ENCODE measurements at regions of chr4 and their contacts with region 1.

Region 1: DNA sequence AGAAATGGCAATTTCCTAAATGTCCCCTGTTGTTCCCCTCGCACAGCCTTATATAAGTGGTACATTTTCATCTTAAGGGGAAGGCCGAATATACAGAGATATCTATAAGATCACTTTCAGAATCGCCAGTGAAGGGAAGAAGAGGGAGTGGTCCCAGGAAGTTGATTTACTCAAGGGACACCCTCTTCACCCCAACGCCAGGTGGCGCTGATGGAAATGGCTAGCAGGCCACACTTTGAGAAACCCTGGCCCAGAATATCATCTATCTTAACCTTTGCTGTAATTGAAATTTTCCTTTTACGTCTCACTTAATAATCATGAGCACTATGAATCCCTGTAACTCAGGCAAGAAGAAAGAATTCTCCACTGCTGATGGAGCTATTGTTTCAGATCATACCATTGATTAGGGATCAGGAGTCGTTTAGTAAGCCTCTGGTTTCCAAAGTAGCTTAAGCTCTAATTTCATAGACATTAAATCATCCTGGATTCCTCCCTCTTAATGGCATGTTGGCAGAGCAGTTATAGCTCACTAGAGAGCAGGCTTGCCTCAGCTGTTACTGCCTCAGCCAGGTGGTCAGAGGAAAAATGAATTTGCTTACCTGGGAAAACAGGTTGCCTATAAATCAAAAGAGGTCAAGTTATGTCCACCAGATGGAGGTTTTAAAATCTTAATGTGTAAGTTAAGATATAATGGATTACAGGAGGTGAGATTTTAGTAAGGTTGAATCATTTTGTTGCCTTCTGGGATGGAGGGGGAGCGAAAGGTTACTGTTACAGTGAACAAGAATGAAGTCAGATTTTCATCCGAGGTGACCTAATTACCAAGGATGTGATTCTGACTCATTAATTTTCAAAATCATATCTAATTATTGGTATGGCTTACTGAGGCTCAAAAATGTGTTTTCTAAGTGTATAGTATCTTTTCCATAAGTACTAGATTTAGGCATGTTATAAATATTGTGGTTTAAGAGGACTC is 941.2 kb upstream of the TENM3 start:
- DNase-seq: peak in 1 of 2 experiments; percentile 69
- H3K4me3 ChIP-seq: no peak overlapping the region
- H3K27ac ChIP-seq: no peak overlapping the region
- H3K4me1 ChIP-seq: no peaks in the 10 kb centered on the region; a peak in 1 of 7 replicates
- H3K27me3 ChIP-seq: no peaks in the 10 kb centered on the region
- CTCF ChIP-seq: peak; percentile 74 to 81 (median 76)
- EP300 ChIP-seq: no peak
- POLR2A ChIP-seq: no peak
- RAD21 ChIP-seq: peak; percentile 73 to 79

Region 2: GRCh38 chr4:181108237-181108636 is 193.8 kb before region 1 on chr4:
- CTCF ChIA-PET with region 1: no interaction called
- POLR2A ChIA-PET with region 1: no interaction called
- DNase-seq: no peak
- H3K4me3 ChIP-seq: no peak overlapping the region
- H3K27ac ChIP-seq: no peak overlapping the region
- H3K4me1 ChIP-seq: no peaks in the 10 kb centered on the region
- H3K27me3 ChIP-seq: no peaks in the 10 kb centered on the region
- CTCF ChIP-seq: no peak
- EP300 ChIP-seq: no peak
- POLR2A ChIP-seq: no peak
- RAD21 ChIP-seq: no peak

Region 3: GRCh38 chr4:181143250-181143854 is 158.7 kb before region 1 on chr4:
- CTCF ChIA-PET with region 1: interaction called, 10 read pairs
- POLR2A ChIA-PET with region 1: no interaction called
- DNase-seq: peak; percentile 34 to 83
- H3K4me3 ChIP-seq: no peak overlapping the region
- H3K27ac ChIP-seq: no peak overlapping the region
- H3K4me1 ChIP-seq: no peaks in the 10 kb centered on the region
- H3K27me3 ChIP-seq: no peaks in the 10 kb centered on the region
- CTCF ChIP-seq: peak; percentile 57 to 89 (median 81)
- EP300 ChIP-seq: no peak
- POLR2A ChIP-seq: no peak
- RAD21 ChIP-seq: peak; percentile 97 to 98